Common myeloid progenitor, CD34-positive (primary cell): ENCODE measurements at regions of chr1 and their contacts with region 1.

Region 1: GRCh38 chr1:28470146-28470545 is 35.7 kb upstream of the RCC1 start:
- DNase-seq: no peak
- H3K4me3 ChIP-seq: no peak overlapping the region
- H3K27ac ChIP-seq: no peak overlapping the region
- H3K4me1 ChIP-seq: peaks cover 0 to 4% (median 2%) of the 10 kb centered on the region in 4 experiments
- H3K27me3 ChIP-seq: no peaks in the 10 kb centered on the region

Region 2: GRCh38 chr1:28412731-28413130 is 57.4 kb before region 1 on chr1:
- CTCF ChIA-PET with region 1: interaction called, 59 read pairs
- POLR2A ChIA-PET with region 1: interaction called, 3 read pairs
- DNase-seq: no peak
- H3K4me3 ChIP-seq: no peak overlapping the region
- H3K27ac ChIP-seq: no peak overlapping the region
- H3K4me1 ChIP-seq: peaks cover 16 to 47% (median 34%) of the 10 kb centered on the region in 4 experiments
- H3K27me3 ChIP-seq: no peaks in the 10 kb centered on the region

Region 3: GRCh38 chr1:28456078-28456477 is 14.1 kb before region 1 on chr1:
- CTCF ChIA-PET with region 1: interaction called, 11 read pairs
- POLR2A ChIA-PET with region 1: interaction called, 3 read pairs
- DNase-seq: peak; percentile 40 to 86 (median 82)
- H3K4me3 ChIP-seq: peak overlapping the region in 2 of 7 experiments; percentile 11 to 15
- H3K27ac ChIP-seq: peak overlapping the region; percentile 10 to 52
- H3K4me1 ChIP-seq: peaks cover 2 to 45% (median 27%) of the 10 kb centered on the region in 4 experiments
- H3K27me3 ChIP-seq: no peaks in the 10 kb centered on the region